ENCODE measurements at regions of chr2 and their contacts with region 1.

Region 1: GRCh38 chr2:101308432-101309210 is at the start of gene RNF149:
- DNase-seq: peak; percentile 92
- ATAC-seq: peak; percentile 73
- H3K4me3 ChIP-seq: peak within 1 kb of the TSS; percentile 83
- H3K27ac ChIP-seq: peak within 1 kb of the TSS; percentile 53
- H3K4me1 ChIP-seq: peaks cover 41% of the 10 kb centered on the region
- H3K27me3 ChIP-seq: no peaks in the 10 kb centered on the region
- CTCF ChIP-seq: no peak
- total RNA-seq, gene RNF149: 47.3 and 68.0 TPM in 2 replicates

Region 2: GRCh38 chr2:101278925-101279324 is 29.7 kb before region 1 on chr2:
- CTCF ChIA-PET with region 1: no interaction called
- POLR2A ChIA-PET with region 1: no interaction called
- intact Hi-C with region 1: loop called (anchors 2 kb)
- DNase-seq: no peak
- ATAC-seq: no peak
- H3K4me3 ChIP-seq: no peak overlapping the region
- H3K27ac ChIP-seq: no peak overlapping the region
- H3K4me1 ChIP-seq: peaks cover 8% of the 10 kb centered on the region; the same call in 1 of the 2 replicates
- H3K27me3 ChIP-seq: no peaks in the 10 kb centered on the region
- CTCF ChIP-seq: no peak

Region 3: DNA sequence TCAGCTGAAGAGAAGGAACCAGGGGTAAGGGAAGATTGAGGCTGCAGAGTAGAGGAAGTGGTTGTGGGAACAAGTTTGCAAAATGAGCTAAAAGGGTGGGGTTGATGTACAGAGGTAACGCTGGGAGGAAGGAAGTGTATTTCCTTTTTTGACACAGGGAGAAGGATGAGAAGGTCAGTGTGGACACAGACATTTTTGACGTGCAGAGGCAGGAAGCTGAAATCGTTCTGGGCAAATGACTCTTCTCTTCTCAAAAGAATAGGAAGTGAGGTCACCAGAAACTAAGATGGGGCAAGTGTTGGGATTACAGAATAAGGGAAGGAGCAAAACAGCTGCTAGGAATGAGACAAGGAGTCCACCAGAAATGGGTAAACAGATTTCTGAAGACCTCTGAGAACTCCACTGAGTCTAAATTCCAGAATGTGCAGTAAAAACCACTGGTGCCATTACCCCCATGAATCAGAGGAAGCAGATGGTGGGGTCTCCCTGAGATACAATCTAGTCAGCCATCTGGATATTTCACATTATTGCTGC is 19.9 kb after region 1 on chr2:
- CTCF ChIA-PET with region 1: interaction called, 4 read pairs
- POLR2A ChIA-PET with region 1: no interaction called
- intact Hi-C with region 1: loop called (anchors 1 kb)
- DNase-seq: peak; percentile 88
- ATAC-seq: peak; percentile 85
- H3K4me3 ChIP-seq: peak overlapping the region; percentile 61
- H3K27ac ChIP-seq: peak overlapping the region; percentile 97
- H3K4me1 ChIP-seq: peaks cover 39% of the 10 kb centered on the region
- H3K27me3 ChIP-seq: no peaks in the 10 kb centered on the region
- CTCF ChIP-seq: no peak

Region 4: DNA sequence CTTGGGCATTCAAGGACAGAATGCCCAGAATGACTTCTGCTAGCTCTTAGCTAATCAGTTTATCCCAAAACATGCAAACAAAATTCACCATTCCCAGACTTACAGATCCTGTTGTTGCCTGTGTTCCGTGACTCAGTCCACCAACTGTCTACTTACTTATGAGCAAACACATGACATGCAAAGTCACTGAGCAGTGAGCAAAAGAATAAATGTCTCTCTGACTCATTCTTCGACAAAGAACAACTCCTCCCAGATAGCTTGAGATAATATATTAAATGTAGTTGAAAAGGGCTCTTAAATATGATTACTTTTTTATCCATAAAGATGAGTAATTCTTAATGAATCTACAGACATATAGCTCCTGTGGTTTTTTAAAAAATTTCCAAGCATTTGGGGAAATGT is 87.7 kb after region 1 on chr2:
- CTCF ChIA-PET with region 1: no interaction called
- POLR2A ChIA-PET with region 1: interaction called, 34 read pairs
- intact Hi-C with region 1: no loop called
- DNase-seq: peak; percentile 96
- ATAC-seq: peak; percentile 87
- H3K4me3 ChIP-seq: peak overlapping the region; percentile 44
- H3K27ac ChIP-seq: peak overlapping the region; percentile 96
- H3K4me1 ChIP-seq: peaks cover 54% of the 10 kb centered on the region
- H3K27me3 ChIP-seq: no peaks in the 10 kb centered on the region
- CTCF ChIP-seq: no peak

Region 5: DNA sequence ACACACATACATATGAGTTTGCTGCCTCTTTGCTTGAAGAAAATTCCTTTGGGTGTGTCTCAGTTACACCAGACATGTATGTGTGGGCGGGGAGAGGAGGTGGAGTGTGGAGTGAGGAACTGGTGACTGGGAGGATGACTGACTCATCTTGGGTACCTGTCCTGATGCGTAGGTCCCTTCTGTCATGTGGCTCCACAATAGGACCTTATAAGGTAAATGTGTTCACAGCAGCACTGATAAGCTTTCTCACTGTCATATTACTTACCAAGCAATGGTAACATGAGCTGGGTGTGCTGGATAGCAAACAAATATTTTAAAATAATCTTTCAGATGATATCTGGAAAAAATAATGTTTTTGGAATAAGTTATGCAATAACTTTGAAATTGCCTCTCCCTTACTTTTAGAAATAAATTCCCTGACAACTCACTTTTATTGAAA is 1355.9 kb after region 1 on chr2:
- CTCF ChIA-PET with region 1: no interaction called
- POLR2A ChIA-PET with region 1: no interaction called
- intact Hi-C with region 1: no loop called
- DNase-seq: peak; percentile 95
- ATAC-seq: peak; percentile 84
- H3K4me3 ChIP-seq: no peak overlapping the region
- H3K27ac ChIP-seq: peak overlapping the region; percentile 74
- H3K4me1 ChIP-seq: peaks cover 48% of the 10 kb centered on the region
- H3K27me3 ChIP-seq: no peaks in the 10 kb centered on the region
- CTCF ChIP-seq: no peak